ENCODE measurements at regions of chr14 and their contacts with region 1.

Region 1: DNA sequence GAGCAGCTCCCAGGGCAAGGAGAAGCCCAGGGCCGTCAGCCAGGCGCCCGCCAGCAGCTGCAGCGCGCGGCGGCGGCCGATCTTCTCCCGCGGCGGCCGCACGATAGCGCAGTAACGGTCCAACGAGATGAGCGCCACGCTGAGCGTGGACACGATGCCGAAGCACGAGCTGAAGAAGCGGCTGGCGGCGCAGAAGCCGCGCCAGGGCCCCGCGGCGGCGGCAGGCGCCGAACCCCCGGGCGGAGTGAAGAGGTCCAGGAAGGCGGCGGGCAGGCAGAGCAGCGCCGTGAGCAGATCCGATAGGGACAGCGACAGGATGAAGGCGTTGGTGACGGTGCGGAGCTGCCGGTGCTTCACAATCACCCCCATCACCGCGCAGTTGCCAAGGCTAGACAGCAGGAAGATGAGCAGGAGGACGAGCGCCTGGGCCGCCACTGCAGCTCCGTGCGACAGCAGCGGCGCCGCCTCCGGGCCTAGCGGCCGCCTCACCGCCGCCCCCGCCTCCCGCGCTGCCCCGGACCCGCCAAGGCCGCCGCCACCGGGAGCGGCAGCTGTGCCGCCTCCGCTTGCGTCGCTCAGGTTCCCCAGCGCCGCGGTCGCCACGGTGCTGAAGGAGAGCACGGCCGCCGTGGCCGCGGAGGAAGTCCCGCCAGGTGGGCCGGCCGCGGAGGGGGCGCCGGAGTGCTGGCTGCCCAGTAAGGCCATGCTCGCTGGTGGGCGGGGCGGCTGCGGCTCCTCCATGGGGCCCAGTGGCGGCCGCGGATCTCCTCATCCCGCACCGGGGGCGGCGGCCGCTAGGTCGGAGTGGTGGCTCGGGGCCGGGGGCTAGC is 479 bp downstream of the GPR135 start:
- DNase-seq: peak; percentile 68
- ATAC-seq: peak; percentile 64
- H3K4me3 Mint-ChIP-seq: peak overlapping the region; percentile 83
- H3K27ac Mint-ChIP-seq: no peak overlapping the region
- H3K4me1 Mint-ChIP-seq: peaks cover 14% of the 10 kb centered on the region
- H3K27me3 Mint-ChIP-seq: peaks cover 22% of the 10 kb centered on the region
- CTCF ChIP-seq: no peak

Region 2: DNA sequence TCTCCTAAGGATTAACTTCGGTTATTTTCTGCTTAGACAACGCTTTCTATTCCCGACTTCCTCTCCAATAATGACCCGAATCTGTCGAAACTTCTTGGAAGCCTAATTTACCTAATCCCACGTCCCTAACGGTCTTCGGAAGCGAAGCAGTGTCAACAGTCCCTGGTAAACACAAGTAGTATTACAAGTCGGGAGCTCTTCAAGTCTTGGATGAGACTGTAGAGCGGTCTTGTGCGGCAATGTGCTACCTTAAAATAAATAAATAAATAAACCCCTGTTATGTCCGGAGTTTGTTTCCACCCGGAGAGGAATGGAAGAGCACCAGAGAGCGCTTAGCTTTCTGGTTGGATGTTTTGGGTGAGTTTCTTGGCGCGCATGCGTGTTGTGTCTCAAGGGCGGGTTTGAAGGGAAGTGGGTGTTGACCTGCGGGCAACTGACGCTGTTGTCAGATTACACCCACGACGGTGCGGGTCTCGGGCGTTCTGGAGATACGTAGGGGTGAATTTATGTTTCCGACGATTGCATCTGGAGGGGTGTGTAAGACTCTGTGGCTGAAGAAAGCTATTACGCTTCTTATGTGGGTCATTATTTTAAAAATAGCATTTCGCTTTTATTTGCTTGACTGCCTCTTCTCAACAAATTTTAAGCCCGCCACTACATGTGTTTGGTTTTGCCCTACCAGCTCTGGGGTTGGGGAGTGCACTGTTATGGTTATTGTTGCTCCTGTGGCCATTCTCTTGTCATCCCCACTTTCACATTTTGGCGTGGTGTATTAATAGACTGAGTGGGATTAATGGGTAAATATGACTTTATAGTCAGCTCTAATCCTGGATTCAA is 1037.2 kb before region 1 on chr14 and contains the starts of genes KIAA0586 and TIMM9:
- CTCF ChIA-PET with region 1: no interaction called
- POLR2A ChIA-PET with region 1: no interaction called
- DNase-seq: peak; percentile 95
- ATAC-seq: peak; percentile 89
- H3K4me3 Mint-ChIP-seq: peak within 1 kb of the TSS; percentile 93
- H3K27ac Mint-ChIP-seq: peak within 1 kb of the TSS; percentile 95
- H3K4me1 Mint-ChIP-seq: peaks cover 16% of the 10 kb centered on the region
- H3K27me3 Mint-ChIP-seq: no peaks in the 10 kb centered on the region
- CTCF ChIP-seq: no peak
- total RNA-seq, gene KIAA0586: 20.5 to 23.5 TPM (median 22.2 TPM) in 3 replicates
- total RNA-seq, gene TIMM9: 47.3 to 55.4 TPM (median 51.1 TPM) in 3 replicates

Region 3: DNA sequence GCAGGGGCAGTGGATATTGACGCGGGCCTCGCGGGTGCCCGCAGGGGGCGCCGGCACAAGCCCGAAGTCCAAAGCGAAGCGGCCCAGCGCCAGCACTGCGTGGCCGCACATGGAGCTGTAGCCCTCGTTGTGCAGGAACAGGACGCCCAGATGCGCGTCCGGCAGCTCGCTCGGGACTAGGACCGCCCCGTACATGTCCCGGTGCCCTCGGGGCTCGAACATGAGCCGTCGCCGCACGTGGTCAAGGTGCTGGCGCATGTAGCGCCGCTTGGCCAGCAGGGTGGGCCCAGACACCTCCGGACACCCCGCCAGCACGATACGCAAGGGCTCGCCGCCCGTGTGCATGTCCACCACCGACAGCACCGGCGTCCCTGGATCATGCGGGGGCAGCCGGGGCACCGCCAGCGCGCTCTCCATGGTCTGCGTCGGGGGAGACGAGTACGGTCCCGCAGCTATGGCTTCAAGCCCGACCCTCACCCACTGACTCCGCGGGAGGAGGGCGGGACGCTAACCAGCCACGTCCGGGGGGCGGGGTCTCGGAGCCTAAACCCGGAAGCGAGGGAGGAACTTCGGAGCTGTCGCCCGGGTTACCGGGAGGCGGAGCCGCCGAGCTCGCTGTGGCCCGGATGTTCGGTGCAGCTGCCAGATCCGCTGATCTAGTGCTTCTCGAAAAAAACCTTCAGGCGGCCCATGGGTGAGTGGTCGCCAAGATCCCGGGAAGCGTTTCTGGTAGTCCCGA is 19.4 kb after region 1 on chr14 and contains the starts of genes JKAMP and L3HYPDH:
- CTCF ChIA-PET with region 1: interaction called, 13 read pairs
- POLR2A ChIA-PET with region 1: interaction called, 13 read pairs
- DNase-seq: peak; percentile 98
- ATAC-seq: peak; percentile 94
- H3K4me3 Mint-ChIP-seq: peak within 1 kb of the TSS; percentile 83
- H3K27ac Mint-ChIP-seq: peak within 1 kb of the TSS; percentile 87
- H3K4me1 Mint-ChIP-seq: peaks cover 19% of the 10 kb centered on the region
- H3K27me3 Mint-ChIP-seq: no peaks in the 10 kb centered on the region
- CTCF ChIP-seq: no peak
- total RNA-seq, gene JKAMP: 29.1 to 33.2 TPM (median 31.7 TPM) in 3 replicates
- total RNA-seq, gene L3HYPDH: 14.3 to 17.5 TPM (median 16.6 TPM) in 3 replicates